HepG2 (cell line): ENCODE measurements at regions of chr16 and their contacts with region 1.

Region 1: DNA sequence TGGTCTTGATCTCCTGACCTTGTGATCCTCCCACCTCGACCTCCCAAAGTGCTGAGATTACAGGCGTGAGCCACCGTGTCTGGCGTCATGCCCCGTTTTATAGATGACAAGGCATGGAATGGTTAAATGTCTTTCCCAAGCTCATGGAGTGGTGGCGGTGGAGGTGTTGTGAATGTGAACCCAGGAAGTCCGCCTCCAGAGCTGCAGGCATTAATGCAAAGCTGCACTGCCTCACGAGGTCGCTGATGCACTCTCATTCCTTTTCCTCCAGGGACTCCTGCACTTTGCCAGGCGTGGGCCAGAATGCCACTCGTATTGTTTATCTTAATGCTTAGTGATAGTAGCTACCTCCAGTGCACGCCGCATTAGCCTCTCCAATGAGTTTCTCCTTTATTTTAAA is 149.6 kb downstream of the WWOX start:
- DNase-seq: peak; percentile 77
- ATAC-seq: peak; percentile 92
- H3K4me3 ChIP-seq: no peak overlapping the region
- H3K27ac ChIP-seq: peak overlapping the region; percentile 52
- H3K4me1 ChIP-seq: peaks cover 65% of the 10 kb centered on the region
- H3K27me3 ChIP-seq: no peaks in the 10 kb centered on the region
- CTCF ChIP-seq: peak; percentile 88
- EP300 ChIP-seq: no peak
- POLR2A ChIP-seq: no peak
- RAD21 ChIP-seq: peak; percentile 86

Region 2: DNA sequence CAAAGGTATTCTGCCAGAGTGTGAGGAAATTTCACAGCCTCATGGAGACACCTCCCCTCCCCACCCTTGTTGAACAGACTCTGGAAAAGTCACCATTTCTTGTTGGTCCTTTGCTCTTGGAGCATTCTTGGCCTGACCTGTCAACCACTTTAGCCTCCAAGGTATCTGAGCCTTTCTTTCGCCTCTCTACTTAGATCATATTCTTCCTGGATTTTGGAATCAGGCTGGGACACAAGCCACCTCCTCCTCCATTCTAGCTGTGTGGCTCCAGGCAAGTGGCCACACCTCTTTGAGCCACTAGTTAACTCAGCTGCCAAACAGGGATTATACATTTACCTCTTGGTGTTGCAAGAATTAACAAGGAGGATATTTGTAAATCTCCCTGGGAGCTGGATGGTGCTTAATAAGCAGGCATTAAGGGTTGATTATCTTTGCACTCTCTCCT is 43.9 kb after region 1 on chr16:
- CTCF ChIA-PET with region 1: no interaction called
- POLR2A ChIA-PET with region 1: no interaction called
- in situ Hi-C with region 1: no loop called
- intact Hi-C with region 1: loop called (anchors 2 kb)
- DNase-seq: peak; percentile 63
- ATAC-seq: peak; percentile 87
- H3K4me3 ChIP-seq: peak overlapping the region in 2 of 3 experiments; percentile 3 to 31; a peak in 1 of 6 replicates
- H3K27ac ChIP-seq: peak overlapping the region; percentile 78
- H3K4me1 ChIP-seq: peaks cover 82% of the 10 kb centered on the region
- H3K27me3 ChIP-seq: no peaks in the 10 kb centered on the region
- CTCF ChIP-seq: no peak
- EP300 ChIP-seq: peak in 1 of 2 experiments; percentile 53; a peak in 1 of 4 replicates
- POLR2A ChIP-seq: 0 out of 4 replicates have a peak, but pooled peaks of 1 of the 2 experiments have one; percentile 42
- RAD21 ChIP-seq: no peak

Region 3: DNA sequence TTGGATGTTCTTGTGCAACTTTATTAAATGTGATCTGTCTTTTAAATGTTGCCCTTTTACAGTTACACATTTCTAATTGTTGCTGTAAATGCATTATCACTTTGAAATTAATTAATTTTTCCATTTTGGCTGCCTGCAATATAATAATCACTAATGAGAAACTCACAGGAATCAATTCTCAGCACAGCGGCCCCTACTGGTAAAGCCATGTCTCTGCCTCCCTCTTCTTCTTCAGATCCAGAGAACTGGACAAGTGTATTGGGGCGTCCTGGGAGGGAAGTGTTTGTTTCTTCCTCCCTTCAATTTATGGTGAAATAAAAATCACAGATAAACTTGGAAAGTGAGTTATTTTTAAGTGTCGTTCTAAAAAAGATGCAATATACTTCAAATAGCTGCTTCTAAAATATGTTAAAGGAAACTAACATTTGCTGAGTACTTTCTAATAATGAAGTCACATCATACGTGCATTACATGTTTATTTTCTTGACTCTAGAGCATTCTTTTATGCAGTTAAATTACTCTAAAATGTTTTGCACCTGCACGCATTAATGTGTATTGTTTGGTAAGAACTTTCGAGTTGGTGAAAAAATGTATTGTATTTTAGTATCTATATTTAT is 188.4 kb after region 1 on chr16:
- CTCF ChIA-PET with region 1: interaction called, 6 read pairs
- POLR2A ChIA-PET with region 1: no interaction called
- in situ Hi-C with region 1: no loop called
- intact Hi-C with region 1: loop called (anchors 2 kb)
- DNase-seq: peak; percentile 38
- ATAC-seq: peak; percentile 47; the same call in 2 of the 3 replicates
- H3K4me3 ChIP-seq: no peak overlapping the region
- H3K27ac ChIP-seq: no peak overlapping the region
- H3K4me1 ChIP-seq: peaks cover 8% of the 10 kb centered on the region
- H3K27me3 ChIP-seq: no peaks in the 10 kb centered on the region
- CTCF ChIP-seq: peak; percentile 75
- EP300 ChIP-seq: no peak
- POLR2A ChIP-seq: no peak
- RAD21 ChIP-seq: peak; percentile 37; the same call in 1 of the 2 replicates

Region 4: GRCh38 chr16:78483124-78483992 is 234.3 kb after region 1 on chr16:
- CTCF ChIA-PET with region 1: no interaction called
- POLR2A ChIA-PET with region 1: no interaction called
- in situ Hi-C with region 1: no loop called
- intact Hi-C with region 1: loop called (anchors 1 kb)
- DNase-seq: peak; percentile 93
- ATAC-seq: peak; percentile 72
- H3K4me3 ChIP-seq: no peak overlapping the region
- H3K27ac ChIP-seq: peak overlapping the region; percentile 90
- H3K4me1 ChIP-seq: peaks cover 89% of the 10 kb centered on the region
- H3K27me3 ChIP-seq: no peaks in the 10 kb centered on the region
- CTCF ChIP-seq: no peak
- EP300 ChIP-seq: peak; percentile 37 to 92; a peak in 3 of 4 replicates
- POLR2A ChIP-seq: no peak
- RAD21 ChIP-seq: no peak

Region 5: GRCh38 chr16:78684040-78684611 is 435.1 kb after region 1 on chr16:
- CTCF ChIA-PET with region 1: no interaction called
- POLR2A ChIA-PET with region 1: no interaction called
- in situ Hi-C with region 1: no loop called
- intact Hi-C with region 1: no loop called
- DNase-seq: peak; percentile 51
- ATAC-seq: peak; percentile 73
- H3K4me3 ChIP-seq: no peak overlapping the region
- H3K27ac ChIP-seq: no peak overlapping the region
- H3K4me1 ChIP-seq: peaks cover 17% of the 10 kb centered on the region
- H3K27me3 ChIP-seq: no peaks in the 10 kb centered on the region
- CTCF ChIP-seq: no peak
- EP300 ChIP-seq: no peak
- POLR2A ChIP-seq: no peak
- RAD21 ChIP-seq: no peak